ENCODE measurements at regions of chr9 and their contacts with region 1.

Region 1: GRCh38 chr9:4762108-4762885 is 21.3 kb upstream of the AK3 start:
- DNase-seq: peak; percentile 94
- H3K4me3 Mint-ChIP-seq: peak overlapping the region; percentile 49
- H3K27ac Mint-ChIP-seq: peak overlapping the region; percentile 81
- H3K4me1 Mint-ChIP-seq: peaks cover 22% of the 10 kb centered on the region
- H3K27me3 Mint-ChIP-seq: peaks cover 7% of the 10 kb centered on the region

Region 2: GRCh38 chr9:4709380-4709779 is 52.9 kb before region 1 on chr9:
- CTCF ChIA-PET with region 1: no interaction called
- intact Hi-C with region 1: no loop called
- DNase-seq: no peak
- H3K4me3 Mint-ChIP-seq: no peak overlapping the region
- H3K27ac Mint-ChIP-seq: no peak overlapping the region
- H3K4me1 Mint-ChIP-seq: peaks cover 18% of the 10 kb centered on the region
- H3K27me3 Mint-ChIP-seq: no peaks in the 10 kb centered on the region

Region 3: DNA sequence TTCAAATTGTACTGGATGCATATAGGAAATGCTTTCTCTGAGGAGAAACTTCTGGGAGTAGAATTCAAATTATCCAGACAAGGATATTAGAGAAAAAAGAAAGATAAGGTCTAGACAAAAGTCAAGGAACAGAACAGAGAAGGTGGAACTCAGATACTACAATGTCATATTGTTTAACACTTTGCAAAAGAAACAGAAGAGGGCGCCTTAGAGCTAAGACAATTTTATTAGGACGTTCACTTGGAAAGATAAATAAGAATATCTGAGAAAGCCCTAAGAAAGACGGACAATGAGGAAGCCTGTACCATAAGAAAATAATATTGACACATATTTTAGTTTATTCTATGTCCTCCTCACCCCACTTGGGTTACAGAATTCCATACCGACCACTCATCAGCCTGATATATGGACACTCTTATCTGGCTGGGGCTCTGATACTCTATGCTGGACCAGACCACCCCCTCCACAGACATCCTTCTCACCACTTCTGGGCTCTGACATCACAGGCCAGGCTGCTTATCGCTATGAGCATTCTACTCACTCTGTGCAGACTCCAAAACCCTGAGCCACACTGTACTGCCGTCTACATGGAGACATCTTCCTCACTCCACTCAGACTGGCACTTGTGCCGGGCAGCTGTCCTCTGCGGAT is 12.1 kb before region 1 on chr9:
- CTCF ChIA-PET with region 1: interaction called, 48 read pairs
- intact Hi-C with region 1: no loop called
- DNase-seq: no peak
- H3K4me3 Mint-ChIP-seq: no peak overlapping the region
- H3K27ac Mint-ChIP-seq: no peak overlapping the region
- H3K4me1 Mint-ChIP-seq: peaks cover 34% of the 10 kb centered on the region
- H3K27me3 Mint-ChIP-seq: no peaks in the 10 kb centered on the region

Region 4: DNA sequence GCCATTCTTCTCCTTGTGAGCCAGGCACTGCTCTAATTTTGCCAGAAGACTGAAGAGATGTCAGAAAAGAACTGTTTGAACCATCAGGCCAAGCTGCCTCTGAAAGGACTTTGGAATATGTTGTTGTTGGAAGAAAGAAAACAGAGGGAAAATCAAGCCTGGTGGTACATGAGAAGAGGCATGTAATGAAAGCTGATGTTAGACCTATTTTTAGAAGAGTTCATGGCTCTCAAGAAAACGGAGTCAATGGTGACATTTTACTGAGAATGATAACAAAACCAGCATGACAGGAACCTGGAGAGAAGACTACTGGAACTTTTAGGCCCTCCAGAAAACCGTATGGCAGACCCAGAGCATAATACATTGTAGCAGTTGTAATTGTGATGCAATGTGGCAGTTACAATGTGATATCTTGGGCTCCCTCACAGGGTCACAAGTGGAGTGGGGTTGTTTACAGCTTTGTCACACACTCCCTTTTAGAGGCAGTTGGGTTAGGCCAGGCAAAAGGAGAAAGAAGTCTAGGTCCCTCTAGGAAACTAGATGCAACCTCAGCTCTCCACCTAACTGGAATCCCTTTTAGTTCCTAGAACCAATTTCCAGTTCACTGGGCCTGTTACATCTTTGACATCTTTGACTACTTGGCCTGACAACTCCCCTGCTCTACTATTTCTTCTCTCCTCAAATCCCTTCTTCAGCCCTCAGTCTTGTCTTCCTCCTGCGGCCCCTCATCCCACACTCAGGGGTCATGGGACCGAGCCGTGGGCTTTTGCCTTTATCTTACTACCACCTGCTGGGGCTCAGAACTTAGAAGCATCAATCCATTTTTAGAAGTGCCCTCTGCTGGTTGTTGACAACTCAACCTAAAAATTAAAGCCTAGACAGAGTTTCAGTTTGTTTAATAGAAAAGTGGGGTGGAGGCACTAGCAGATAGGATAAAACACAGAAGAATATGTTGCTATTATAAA is 161.6 kb after region 1 on chr9:
- CTCF ChIA-PET with region 1: interaction called, 18 read pairs
- intact Hi-C with region 1: loop called (anchors 1 kb)
- DNase-seq: peak; percentile 48
- H3K4me3 Mint-ChIP-seq: no peak overlapping the region
- H3K27ac Mint-ChIP-seq: peak overlapping the region; percentile 57
- H3K4me1 Mint-ChIP-seq: peaks cover 32% of the 10 kb centered on the region
- H3K27me3 Mint-ChIP-seq: no peaks in the 10 kb centered on the region

Region 5: DNA sequence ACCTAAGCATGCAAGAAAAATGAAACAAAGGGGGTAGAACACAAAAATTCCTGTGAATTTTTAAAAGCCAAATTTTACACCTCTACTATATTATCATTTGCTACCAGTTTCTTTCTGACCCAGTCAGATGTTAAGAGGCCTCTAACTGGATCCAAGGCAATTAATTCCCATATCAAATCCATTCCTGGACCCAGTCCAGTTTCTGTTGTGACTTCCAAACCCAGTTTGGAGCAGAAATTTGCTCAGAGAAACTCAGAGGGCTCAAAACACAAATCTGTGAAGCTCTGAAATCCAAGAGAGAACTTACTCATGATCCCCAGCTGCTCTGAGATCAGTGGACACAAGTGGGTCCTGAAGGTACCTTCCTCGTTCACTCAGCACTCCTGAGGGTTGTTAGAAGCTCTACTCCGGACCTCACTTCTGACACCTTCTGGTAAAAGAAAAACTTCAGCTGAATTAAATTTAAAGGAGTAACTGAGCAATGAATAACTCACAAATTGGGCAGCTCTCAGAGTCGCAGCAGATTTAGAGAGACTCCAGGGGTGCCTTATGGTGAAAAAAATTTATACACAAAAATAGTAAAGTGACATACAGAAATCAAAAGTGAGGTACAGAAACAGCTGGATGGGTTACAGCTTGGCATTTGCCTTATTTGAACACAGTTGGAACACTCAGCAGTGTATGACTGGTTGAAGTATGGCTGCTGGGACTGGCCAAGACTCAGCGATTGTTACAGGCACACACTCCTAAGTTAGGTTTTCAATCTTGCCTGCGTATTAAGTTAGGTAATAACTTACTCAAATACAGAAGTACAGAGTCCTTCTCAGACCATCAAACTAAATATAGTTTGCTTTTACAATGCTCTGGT is 501.3 kb after region 1 on chr9:
- CTCF ChIA-PET with region 1: interaction called, 3 read pairs
- intact Hi-C with region 1: loop called (anchors 2 kb)
- DNase-seq: peak; percentile 11
- H3K4me3 Mint-ChIP-seq: no peak overlapping the region
- H3K27ac Mint-ChIP-seq: no peak overlapping the region
- H3K4me1 Mint-ChIP-seq: peaks cover 15% of the 10 kb centered on the region
- H3K27me3 Mint-ChIP-seq: no peaks in the 10 kb centered on the region